CD8-positive, alpha-beta T cell (primary cell): ENCODE measurements at regions of chr17 and their contacts with region 1.

Region 1: DNA sequence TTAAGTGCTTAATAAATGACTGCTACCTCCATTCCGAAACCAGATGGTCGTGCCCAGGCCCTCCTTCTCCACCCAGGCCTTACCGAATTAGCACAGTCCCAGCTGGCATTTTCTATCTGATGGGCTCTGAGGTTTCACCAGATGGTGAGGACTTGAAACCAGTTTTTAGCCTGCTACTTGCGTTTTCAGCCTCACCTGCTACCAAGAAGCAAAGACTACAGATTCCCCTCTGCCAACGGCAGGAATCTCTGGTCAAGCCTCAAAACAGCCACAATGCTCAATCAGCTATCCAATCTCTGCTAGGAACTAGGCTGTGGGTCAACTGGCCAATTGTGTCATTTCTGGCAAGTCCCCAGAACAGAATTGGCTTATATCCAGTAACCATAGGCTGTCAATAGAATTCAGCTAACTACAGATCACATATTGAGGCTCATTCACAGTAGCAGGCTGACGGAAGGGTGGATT is 11.7 kb downstream of the PECAM1 start:
- DNase-seq: no peak
- ATAC-seq: no peak
- H3K4me3 ChIP-seq: no peak overlapping the region
- H3K4me3 Mint-ChIP-seq: no peak overlapping the region
- H3K27ac ChIP-seq: no peak overlapping the region
- H3K27ac Mint-ChIP-seq: peak overlapping the region; percentile 34
- H3K4me1 ChIP-seq: peaks cover 25% of the 10 kb centered on the region
- H3K4me1 Mint-ChIP-seq: peaks cover 52% of the 10 kb centered on the region
- H3K27me3 ChIP-seq: no peaks in the 10 kb centered on the region
- H3K27me3 Mint-ChIP-seq: no peaks in the 10 kb centered on the region
- CTCF ChIP-seq: no peak

Region 2: DNA sequence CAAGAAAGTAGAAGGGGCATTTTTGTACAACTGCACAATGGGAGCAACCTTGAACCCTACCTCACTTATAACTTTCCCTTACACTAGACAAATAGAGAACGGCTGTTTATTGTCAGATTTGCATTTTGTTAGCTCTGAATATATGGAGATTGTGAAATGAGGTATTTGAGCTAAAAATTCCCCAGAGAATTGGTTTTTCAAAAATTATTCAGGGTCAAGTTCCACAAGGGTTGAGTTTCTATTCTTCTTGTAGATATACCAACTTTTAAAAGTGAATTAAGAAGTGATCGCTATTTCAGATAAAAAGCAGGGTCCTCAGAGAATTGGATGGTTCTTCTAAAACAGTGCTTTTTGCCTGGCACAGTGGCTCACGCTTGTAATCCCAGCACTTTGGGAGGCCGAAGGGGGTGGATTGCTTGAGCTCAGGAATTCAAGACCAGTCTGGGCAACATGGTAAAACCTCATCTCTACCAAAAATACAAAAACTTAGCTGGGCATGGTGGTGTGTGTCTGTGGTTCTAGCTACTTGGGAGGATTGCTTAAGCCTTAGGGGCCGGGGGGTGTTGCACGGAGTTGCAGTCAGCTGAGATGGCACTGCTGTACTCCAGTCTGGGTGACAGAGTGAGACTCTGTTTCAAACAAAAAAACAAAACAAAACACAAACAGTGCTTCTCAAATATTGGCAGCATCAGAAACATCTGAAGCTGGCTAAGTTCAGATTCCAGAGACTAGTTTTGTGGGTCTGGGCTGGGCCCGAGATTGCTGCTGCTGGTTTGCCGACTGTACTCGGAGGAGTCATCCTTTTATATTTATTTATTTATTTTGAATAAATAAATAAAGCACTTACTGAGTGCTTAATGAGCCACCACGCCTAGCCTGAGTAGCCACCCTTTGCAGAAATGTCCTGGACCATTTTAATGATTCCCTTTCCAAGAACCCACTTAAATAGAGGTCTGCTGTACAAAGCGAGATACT is 39.1 kb before region 1 on chr17:
- CTCF ChIA-PET with region 1: interaction called, 3 read pairs
- POLR2A ChIA-PET with region 1: no interaction called
- intact Hi-C with region 1: loop called in 1 of 2 experiments (anchors 5 kb)
- DNase-seq: no peak
- ATAC-seq: no peak
- H3K4me3 ChIP-seq: no peak overlapping the region
- H3K4me3 Mint-ChIP-seq: no peak overlapping the region
- H3K27ac ChIP-seq: no peak overlapping the region
- H3K27ac Mint-ChIP-seq: peak overlapping the region; percentile 49
- H3K4me1 ChIP-seq: peaks cover 7% of the 10 kb centered on the region
- H3K4me1 Mint-ChIP-seq: peaks cover 23% of the 10 kb centered on the region
- H3K27me3 ChIP-seq: no peaks in the 10 kb centered on the region
- H3K27me3 Mint-ChIP-seq: no peaks in the 10 kb centered on the region
- CTCF ChIP-seq: no peak